ENCODE measurements at regions of chr7 and their contacts with region 1.

Region 1: DNA sequence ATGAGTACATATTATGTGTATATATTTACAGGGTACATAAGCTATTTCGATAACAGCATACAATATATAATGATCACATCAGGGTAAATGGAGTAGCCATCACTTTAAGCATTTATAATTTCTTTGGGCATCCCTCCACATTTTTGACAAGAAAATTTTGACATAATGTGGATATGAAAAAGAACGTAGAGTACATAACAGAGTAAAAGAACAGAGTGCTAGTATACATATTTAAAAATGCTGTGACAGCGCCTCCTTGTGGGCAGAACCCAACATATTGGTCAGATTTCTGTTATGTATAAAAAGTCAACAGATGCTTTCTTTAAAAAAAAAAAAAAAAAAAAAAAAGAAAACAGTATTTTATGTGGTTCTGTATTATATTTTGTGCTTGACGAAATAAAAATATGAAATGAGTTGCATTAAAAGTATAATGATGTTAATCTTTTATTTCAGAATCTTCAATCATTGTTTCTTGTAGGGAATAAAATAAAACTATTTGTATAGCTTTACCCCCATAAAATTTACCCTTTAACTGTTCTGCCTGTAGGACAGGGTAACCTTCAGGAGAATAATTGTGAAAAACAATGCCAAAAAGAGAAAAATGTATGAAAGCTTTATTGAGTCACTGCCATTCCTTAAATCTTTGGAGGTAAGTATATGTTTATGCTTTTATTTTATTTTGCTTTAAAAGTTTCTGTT is 18.3 kb upstream of the HBP1 start:
- DNase-seq: peak; percentile 34
- CTCF ChIP-seq: peak; percentile 29

Region 2: GRCh38 chr7:106947244-106947728 is 203.2 kb before region 1 on chr7:
- CTCF ChIA-PET with region 1: interaction called, 33 read pairs
- POLR2A ChIA-PET with region 1: no interaction called
- DNase-seq: peak; percentile 52
- CTCF ChIP-seq: peak; percentile 36

Region 3: DNA sequence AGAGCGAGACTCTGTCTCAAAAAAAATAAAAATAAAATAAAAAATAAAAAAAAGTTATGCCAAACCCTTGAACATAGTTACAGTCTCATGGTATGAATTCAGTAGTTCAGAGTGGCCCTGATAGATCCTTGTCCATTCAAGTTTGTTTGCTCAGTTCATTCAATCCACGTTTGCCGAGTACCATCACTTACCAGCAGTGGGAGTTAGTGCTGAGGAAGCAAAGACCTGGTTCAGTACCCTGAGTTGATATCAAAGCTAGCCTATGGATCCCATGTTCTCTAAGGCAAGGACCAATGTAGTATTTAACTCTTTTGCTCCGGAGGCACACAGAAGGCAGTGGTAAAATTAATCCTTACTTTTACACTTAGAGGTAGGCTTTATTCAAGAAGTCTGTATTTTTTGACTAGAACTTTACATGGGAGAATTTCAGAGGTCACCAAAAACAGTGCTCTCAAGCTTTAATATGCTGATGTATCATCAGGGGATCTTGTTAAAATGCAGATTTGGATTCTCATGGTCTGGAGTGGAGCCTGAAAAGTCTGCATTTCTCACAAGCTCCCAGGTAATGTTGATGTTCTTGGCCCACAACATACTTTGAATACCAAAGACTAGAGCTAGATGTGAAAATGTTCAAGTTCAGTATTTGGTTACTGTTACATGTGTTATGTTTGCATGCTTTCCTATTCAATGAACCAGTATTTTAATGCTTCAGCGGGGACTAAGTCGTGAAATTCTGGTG is 19.9 kb before region 1 on chr7:
- CTCF ChIA-PET with region 1: interaction called, 24 read pairs
- POLR2A ChIA-PET with region 1: no interaction called
- DNase-seq: no peak
- CTCF ChIP-seq: no peak

Region 4: GRCh38 chr7:107725151-107725740 is 574.7 kb after region 1 on chr7:
- CTCF ChIA-PET with region 1: interaction called, 14 read pairs
- POLR2A ChIA-PET with region 1: no interaction called
- DNase-seq: peak; percentile 66
- CTCF ChIP-seq: peak; percentile 63